ENCODE measurements at regions of chr1 and their contacts with region 1.

Region 1: DNA sequence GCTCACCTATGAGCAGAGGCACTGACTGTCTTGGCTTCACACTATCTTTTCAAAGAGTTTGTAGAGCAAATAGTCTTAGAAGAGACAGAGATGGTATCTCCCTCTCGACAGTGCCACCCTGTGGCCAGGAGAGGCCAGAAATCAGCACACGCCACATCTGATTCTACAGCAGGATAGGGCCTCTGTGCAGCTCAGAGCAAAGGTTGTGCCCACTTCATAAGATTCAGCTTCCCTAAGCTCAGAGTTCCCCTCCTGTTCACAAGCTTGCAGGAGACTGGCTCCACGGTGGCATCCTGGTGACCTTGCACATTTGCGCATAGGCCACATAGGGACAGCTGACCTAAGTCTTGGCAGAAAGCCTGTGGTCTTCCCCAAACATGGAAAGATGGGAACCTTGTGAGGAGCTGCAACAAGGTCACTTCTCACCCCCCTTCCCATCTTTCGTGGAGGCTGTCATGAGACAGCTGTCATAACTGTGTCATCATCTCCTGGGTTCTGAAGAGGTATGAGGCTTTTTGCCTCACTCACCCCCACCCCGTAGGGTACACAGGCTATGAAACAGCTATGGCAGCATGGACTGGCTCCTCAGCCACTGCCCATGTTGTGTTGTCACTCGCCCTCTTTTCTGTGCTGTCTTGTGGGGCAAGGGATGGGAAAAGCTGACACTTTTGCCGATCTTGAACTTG is 3.0 kb downstream of the ITLN2 start:
- DNase-seq: peak; percentile 83
- ATAC-seq: peak; percentile 92
- H3K4me3 Mint-ChIP-seq: no peak overlapping the region
- H3K27ac Mint-ChIP-seq: no peak overlapping the region
- H3K4me1 Mint-ChIP-seq: peaks cover 4% of the 10 kb centered on the region
- H3K27me3 Mint-ChIP-seq: no peaks in the 10 kb centered on the region

Region 2: DNA sequence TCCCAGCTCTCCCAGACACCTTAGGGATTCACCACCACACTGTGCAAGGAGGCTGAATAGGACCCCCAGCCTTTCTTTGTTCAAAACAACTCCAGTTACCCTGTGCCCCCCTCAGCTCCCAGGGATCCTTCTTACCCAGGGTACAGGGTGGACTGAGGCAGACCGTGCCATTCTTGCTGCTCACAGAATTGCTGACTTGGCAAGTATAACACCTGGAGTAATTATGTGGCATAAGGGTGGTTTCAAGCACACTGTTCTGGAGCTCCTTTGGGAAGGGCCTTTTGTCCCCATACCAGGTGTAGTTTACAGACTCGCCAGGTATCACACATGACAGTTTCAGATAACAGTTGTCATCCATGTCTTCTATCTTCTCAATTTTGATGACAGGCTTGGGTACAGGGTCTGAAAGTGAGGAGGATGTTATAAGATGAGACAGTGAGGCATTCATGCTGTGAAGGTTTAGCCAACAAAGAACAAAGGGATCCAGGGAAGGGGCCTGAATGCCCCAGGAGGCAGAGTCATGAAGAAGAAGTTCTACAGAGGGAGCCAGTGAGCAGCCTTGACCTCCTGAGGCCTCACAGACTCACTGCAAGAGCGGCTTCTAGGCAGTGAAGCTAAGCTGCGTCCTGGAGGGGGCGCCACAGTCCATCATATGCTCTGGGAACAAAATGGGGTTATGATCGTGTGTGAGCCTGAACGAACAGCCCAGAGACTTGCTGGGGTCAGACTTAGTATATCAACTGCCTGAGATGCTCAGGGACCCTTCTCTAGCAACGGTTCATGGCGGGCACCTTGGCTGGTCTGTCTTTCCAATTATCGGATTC is 270.3 kb before region 1 on chr1:
- CTCF ChIA-PET with region 1: interaction called, 54 read pairs
- DNase-seq: peak; percentile 93
- ATAC-seq: peak; percentile 72
- H3K4me3 Mint-ChIP-seq: no peak overlapping the region
- H3K27ac Mint-ChIP-seq: peak overlapping the region; percentile 92
- H3K4me1 Mint-ChIP-seq: peaks cover 83% of the 10 kb centered on the region
- H3K27me3 Mint-ChIP-seq: no peaks in the 10 kb centered on the region

Region 3: DNA sequence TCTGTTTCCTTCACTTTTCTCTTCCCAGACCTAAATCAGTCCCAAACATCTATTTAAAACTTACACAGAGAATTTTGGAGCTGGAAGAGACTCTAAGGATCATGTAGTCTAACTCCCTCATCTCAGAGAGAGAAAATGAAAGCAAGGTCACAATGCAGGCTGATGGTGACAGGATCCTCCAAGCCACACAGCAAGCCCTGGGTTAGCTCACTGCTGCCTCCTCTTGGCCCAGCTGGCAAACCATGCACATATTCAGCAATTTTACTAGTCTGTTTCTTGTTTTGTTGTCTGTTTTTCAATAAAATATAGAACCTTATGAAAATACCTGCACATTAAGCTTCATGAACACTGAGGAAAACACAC is 183.3 kb before region 1 on chr1:
- CTCF ChIA-PET with region 1: interaction called, 28 read pairs
- DNase-seq: peak; percentile 94
- ATAC-seq: peak; percentile 95
- H3K4me3 Mint-ChIP-seq: peak overlapping the region; percentile 78
- H3K27ac Mint-ChIP-seq: peak overlapping the region; percentile 91
- H3K4me1 Mint-ChIP-seq: peaks cover 32% of the 10 kb centered on the region
- H3K27me3 Mint-ChIP-seq: no peaks in the 10 kb centered on the region

Region 4: GRCh38 chr1:160795951-160796383 is 155.6 kb before region 1 on chr1 and contains the start of gene LY9:
- CTCF ChIA-PET with region 1: interaction called, 42 read pairs
- DNase-seq: peak; percentile 93
- ATAC-seq: peak; percentile 92
- H3K4me3 Mint-ChIP-seq: peak within 1 kb of the TSS; percentile 74
- H3K27ac Mint-ChIP-seq: peak within 1 kb of the TSS; percentile 89
- H3K4me1 Mint-ChIP-seq: peaks cover 59% of the 10 kb centered on the region
- H3K27me3 Mint-ChIP-seq: peaks cover 27% of the 10 kb centered on the region
- total RNA-seq, gene LY9: 1.3 to 8.0 TPM

Region 5: GRCh38 chr1:160830321-160831153 is 121.0 kb before region 1 on chr1:
- CTCF ChIA-PET with region 1: interaction called, 270 read pairs
- DNase-seq: peak; percentile 81
- ATAC-seq: peak; percentile 70
- H3K4me3 Mint-ChIP-seq: no peak overlapping the region
- H3K27ac Mint-ChIP-seq: no peak overlapping the region
- H3K4me1 Mint-ChIP-seq: peaks cover 18% of the 10 kb centered on the region
- H3K27me3 Mint-ChIP-seq: no peaks in the 10 kb centered on the region

Region 6: DNA sequence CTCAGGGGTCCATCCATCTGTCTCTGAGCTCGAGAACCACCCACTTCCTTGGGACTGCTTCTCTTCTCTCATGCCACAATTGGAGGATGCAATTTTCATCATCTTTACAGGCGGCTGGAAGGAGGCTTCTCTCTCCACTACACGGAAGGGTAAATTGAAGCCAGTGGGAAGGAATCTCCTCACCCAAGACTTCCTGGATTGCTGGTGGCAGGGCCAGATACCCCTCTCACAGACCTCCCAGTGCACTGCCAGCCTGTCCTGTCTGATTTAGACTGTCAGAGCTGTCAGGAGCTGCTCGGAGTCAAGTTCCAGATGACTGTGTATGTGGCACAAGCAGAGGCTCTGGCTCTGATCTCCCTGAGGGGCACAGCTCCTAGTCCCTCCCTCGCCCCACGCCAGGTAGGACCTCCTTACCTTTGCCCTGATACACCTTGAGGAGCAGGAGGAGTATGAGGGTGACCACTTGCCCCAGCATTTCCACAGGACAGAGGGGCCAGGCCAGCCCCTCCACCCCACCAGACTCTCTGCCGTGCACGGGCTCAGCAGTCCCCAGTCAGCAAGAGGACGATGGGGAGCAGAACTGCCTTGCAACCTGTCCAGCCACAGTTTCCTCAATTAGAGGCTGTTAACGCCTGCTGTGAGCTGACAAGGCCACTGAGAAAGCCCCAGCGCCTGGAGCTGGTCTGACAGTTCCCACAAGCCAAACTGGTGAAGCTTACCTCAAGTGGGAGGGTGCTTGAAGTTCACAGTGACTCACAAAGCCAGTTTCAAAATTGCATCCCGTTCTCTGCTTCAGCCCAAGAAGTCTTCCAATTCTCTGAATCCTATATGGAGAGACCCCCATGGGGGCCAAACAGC is 89.2 kb before region 1 on chr1 and contains the start of gene CD244:
- CTCF ChIA-PET with region 1: interaction called, 56 read pairs
- DNase-seq: peak; percentile 95
- ATAC-seq: peak; percentile 92
- H3K4me3 Mint-ChIP-seq: peak within 1 kb of the TSS; percentile 89
- H3K27ac Mint-ChIP-seq: peak within 1 kb of the TSS; percentile 90
- H3K4me1 Mint-ChIP-seq: peaks cover 53% of the 10 kb centered on the region
- H3K27me3 Mint-ChIP-seq: no peaks in the 10 kb centered on the region
- total RNA-seq, gene CD244: 25.6 to 34.5 TPM

Measured in activated CD8-positive, alpha-beta memory T cell treated with anti-CD3 and anti-CD28 coated beads, Interleukin-2, amount 10 ng/mL, durations not matched to agents 7 days and 5 days (primary cell).